ENCODE measurements at regions of chr5 and their contacts with region 1.

Region 1: DNA sequence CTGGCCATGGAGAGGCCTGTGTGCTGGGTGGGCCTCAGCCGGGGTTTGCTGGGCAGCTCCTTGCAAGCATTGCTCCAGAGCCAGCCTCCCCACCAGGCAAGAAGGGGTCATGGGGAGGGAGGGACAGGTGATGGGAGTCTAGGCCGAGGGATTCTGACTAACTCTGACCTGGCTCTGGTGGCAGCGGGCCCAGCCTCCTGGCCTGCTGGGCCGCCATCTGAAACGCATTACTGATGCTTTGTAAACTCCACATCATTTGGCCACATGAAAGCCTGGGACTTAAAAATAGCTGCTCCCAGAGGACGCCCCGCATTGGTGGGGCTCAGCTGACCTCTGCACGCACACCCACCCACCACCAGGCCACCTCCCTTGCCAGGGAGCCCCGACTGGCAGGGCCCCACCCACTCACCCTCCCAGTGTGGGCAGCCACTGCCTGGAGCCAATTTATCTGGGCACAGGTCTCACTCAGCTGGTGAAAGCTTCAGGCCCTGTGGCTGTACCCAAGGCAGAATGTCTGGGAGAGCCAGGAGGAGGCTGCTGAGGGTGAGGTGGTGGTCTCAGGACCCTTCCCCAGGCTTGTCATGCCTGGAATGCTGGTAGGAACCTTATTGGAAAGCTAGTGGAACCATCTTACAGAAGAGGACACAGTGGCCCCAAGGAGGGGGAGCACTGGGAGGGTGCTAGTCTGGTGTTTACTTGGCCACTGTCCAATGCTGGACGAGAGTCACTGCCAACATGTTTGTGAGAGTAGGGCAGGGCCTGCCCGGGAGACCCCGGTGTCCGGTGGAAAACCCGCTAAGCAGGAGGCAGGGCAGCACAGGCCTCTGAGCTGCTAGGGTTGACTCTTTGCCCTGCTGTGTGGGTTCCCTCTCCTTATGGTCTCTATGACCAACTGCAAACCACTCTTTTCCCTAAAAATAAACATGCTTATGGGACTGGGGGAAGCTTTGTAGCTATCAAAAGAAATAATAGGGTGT is 10.8 kb downstream of the TCF7 start:
- DNase-seq: no peak
- CTCF ChIP-seq: no peak

Region 2: DNA sequence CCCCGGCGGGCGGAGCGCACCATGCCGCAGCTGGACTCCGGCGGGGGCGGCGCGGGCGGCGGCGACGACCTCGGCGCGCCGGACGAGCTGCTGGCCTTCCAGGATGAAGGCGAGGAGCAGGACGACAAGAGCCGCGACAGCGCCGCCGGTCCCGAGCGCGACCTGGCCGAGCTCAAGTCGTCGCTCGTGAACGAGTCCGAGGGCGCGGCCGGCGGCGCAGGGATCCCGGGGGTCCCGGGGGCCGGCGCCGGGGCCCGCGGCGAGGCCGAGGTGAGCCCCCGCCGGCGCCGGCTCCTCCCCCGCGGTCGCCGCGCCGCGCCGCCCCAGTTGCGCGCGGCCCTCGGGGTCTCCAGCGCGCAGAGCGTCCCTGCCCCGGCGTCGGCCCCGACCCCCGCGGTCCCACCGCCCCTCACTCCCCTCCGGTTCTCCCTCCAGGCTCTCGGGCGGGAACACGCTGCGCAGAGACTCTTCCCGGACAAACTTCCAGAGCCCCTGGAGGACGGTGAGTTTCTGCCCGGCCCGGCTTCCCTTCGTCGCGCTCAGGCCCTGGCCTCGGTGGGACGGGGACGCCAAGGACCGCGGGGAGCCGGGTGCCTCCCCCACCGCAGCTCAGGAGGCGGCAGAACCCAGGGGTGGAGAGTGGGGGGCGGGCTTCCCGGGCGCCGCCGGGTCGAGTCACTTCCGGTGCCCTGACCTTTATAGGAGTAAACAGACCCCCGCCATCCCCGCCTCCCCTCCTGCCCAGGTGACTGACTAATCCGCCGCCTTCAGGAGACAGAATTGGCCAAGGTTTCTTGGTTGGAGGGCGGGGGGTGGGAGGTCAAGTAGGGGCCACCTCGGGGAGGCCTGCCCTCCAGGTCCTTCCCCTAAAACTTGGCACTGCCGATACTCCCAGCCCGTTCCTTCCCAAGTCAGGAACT is 10.2 kb before region 1 on chr5:
- CTCF ChIA-PET with region 1: interaction called, 17 read pairs
- POLR2A ChIA-PET with region 1: interaction called, 6 read pairs
- DNase-seq: peak; percentile 50
- CTCF ChIP-seq: no peak